Panc1 (cell line): ENCODE measurements at regions of chr5 and their contacts with region 1.

Region 1: DNA sequence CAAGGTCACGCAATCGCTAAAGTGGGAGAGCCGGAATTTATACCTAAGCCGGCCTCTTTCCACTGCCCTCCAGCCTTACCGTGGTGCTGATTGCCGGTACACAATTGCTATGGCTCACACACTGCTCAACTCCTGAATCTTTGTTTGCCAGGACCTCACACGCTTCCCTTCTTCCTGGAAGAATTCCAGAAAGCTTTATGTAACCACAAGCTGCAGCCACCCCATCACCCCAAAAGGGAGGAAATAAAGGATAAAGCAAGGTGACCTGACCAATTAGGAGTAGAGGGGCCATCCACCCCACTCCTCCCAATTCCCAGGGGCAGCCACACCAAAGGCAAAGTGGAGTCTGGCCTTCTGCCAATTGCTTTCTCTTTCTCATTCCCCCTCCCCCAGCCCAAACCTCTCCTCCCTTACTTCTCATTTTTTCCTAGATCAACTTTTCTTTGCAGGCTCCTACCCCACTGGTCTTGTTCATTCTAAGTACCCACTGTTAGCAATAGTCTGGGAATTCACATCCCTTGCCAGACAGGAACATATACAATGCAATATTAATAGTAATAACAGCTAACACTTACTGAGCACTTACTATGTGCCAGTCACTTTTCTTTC is 18.0 kb upstream of the CDC23 start:
- DNase-seq: no peak
- ATAC-seq: peak; percentile 65
- H3K4me3 ChIP-seq: no peak overlapping the region
- H3K27ac ChIP-seq: no peak overlapping the region
- H3K4me1 ChIP-seq: peaks cover 12% of the 10 kb centered on the region
- H3K27me3 ChIP-seq: no peaks in the 10 kb centered on the region
- CTCF ChIP-seq: no peak

Region 2: DNA sequence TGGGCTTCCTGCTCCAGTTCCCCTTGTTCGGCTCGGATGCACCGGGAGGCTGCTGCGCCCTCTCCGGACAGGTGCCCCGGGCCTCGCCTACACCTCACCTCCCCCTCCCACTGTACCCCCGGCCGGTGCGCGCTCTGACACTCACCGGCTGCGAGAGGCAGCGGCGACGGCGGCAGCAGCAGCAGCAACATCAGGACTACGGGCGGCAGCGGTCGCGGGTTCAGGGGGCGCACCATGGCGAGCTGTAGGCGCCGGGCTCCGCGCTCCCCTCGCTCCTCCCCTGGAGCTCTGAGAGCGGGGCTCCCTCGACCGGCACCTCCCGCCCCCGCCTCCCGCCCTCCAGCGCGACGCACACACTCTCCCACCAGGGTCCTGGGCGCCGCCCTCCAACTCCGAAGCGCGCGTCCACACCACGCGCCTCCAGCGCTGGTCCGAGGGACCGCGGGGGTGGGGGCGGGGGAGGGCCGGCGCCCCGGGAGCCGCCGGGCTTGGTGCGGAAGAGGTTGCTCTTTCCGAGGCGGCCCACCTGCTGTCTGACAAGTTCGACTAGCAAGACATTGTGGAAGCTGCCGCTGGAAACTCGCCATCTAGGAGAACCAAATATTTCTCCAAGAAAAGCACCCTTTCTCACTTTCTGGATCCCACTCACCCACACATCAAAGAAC is 43.2 kb after region 1 on chr5 and contains the start of gene GFRA3:
- CTCF ChIA-PET with region 1: interaction called, 10 read pairs
- POLR2A ChIA-PET with region 1: no interaction called
- in situ Hi-C with region 1: no loop called
- intact Hi-C with region 1: no loop called
- DNase-seq: no peak
- ATAC-seq: peak; percentile 37; the same call in 1 of the 2 replicates
- H3K4me3 ChIP-seq: peak within 1 kb of the TSS; percentile 11 to 12; a peak in 3 of 4 replicates
- H3K27ac ChIP-seq: no peak within 1 kb of the TSS
- H3K4me1 ChIP-seq: peaks cover 3% of the 10 kb centered on the region; the same call in 1 of the 2 replicates
- H3K27me3 ChIP-seq: no peaks in the 10 kb centered on the region; the same call in 1 of the 2 replicates
- CTCF ChIP-seq: no peak
- total RNA-seq, gene GFRA3: 1.5 TPM